Posterior cingulate gyrus (tissue), 11 donors: ENCODE measurements at regions of chr9 and their contacts with region 1.

Region 1: DNA sequence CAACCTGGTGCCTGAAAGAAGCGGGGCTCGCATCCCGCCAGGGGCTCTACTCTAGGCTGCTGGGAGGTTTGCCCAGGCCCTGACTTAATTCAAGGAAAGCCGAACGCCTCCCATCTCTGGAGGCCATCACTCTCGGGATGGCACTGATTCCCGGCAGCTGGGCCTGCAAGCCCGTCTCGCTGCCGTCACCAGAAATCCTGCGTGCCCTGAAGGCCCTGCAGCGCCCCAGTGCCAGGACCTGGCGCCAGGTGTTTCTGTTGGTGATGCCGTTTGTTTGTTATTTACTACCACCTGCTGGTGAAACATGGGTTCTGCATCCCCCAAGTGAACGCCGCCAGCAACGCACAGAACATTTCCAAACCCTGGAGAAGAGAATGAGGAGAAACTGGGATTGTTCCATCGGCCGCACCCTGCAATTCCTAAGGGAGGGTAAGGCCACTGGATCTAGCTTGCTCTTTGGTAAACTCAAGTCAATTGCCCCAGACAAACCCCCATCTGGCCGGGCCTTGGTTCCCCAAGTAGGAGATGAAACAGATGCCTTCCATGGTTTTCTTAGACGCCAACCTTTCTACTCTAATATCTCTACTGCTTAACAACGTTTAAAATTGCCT is 77.9 kb downstream of the AK8 start:
- DNase-seq: peak; percentile 43 to 96 (median 70)

Region 2: DNA sequence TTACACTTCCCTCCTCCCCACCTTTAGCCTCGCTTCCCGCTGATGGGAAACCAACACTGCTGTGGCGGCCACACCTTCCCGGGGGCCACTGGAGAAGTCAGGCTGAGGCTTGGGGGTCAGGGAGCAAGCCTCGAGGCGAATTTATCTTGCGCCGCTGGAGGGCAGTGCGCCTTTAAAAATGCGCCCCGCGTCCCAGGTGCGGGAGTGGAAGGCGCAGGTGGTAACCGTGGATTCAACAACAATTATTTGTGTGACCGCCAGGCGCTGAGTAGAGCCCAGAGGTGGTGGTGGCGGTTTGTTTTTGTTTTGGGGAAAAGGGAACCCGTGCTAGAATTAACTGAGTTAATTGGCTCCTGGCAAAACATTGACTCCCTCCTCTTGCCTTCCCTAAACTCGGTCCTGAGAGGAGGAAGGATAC is 389.0 kb before region 1 on chr9:
- intact Hi-C with region 1: loop called (anchors 2 kb)
- DNase-seq: peak in 4 of 10 donors; percentile 10 to 24 (median 18)

Region 3: GRCh38 chr9:132507746-132508469 is 292.2 kb before region 1 on chr9:
- intact Hi-C with region 1: loop called (anchors 1 kb)
- DNase-seq: peak in 9 of 10 donors; percentile 42 to 92 (median 70)

Region 4: GRCh38 chr9:132669698-132670456 is 130.3 kb before region 1 on chr9 and contains the start of gene DDX31:
- intact Hi-C with region 1: loop called (anchors 10 kb)
- DNase-seq: peak; percentile 78 to 98 (median 86)

Region 5: DNA sequence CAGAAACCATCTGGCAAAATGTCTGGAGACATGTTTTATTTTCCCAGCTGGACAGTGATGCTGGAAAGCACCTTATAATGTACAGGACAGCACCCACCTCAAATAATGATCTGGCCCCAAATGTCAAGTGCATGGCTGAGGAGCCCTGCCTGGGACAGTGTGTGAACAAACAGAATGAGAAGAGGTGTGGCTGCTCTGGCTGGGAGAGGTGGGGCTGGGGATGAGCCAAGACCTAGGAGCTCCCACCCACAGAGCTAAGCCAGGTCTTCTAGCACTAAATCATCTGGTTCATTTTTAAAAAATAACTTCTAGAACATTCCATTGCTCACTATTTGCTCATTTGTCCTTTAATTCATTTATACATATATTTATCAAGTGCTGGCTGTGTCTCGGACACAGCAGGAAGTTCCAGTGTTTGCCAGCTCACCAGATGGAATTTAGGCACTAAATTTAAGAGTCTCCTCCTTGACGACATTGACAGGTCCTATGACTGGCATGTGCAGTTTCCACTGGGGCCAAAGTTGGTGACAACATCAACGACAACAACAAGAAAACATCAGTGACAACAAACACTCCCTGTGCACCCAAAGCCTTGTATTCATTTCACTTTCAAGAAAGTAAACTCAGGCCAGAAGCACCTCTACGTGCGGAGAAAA is 70.8 kb before region 1 on chr9:
- intact Hi-C with region 1: no loop called
- DNase-seq: peak in 2 of 10 donors; percentile 10 to 43

Region 6: DNA sequence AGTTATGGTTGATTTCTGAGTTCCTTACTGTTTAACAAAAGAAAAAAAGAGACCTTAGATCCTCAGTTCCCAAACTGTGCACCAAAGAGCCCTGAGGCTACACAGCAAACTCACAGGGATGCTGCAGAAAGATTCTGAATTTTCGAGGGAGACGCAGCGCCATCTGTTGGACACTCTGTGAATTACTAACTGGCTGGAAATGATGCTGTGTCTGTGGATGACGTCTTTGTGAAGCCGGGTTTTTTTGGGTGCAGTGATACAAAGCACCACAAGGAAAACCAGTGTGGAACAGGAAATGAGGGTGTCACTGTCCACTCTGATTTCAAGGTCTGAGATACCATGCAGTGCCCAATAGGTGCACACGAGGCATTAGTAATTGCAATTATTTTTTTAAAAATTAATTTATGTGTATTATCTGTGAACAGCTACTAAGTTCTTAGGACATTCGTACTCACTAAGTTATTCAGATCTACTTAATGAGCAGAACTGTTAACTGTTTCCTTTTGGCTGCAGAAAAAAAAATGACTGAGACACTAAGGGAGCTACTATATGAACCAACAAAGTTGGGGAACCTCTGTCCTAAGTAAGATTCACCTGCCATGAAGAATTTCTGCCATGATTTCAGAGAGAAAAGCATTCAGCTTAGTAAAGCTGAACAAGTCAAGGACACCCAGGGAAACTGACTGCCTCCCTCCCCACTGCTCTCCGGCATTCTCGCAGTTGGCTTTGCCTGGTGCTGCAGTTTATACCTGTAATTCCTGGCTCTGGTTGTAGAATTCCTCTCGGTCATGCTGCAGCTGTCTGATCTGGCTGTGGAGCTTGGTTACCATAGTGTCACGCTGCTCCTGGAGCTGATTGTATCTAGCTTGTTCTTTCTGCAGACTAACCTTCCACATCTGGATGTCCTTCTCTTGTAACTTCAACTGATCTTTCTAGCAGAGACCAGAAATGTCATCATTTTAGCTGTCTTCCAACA is 102.0 kb after region 1 on chr9:
- intact Hi-C with region 1: loop called (anchors 5 kb)
- DNase-seq: peak; percentile 53 to 97 (median 84)